Vagina (tissue), 2 donors: ENCODE measurements at regions of chr2 and their contacts with region 1.

Region 1: GRCh38 chr2:219527076-219527394 is 12.8 kb downstream of the ASIC4 start:
- DNase-seq: no peak
- H3K4me3 ChIP-seq: no peak overlapping the region
- H3K27ac ChIP-seq: no peak overlapping the region
- H3K4me1 ChIP-seq: peaks cover 14% of the 10 kb centered on the region
- H3K27me3 ChIP-seq: no peaks in the 10 kb centered on the region
- CTCF ChIP-seq: no peak
- POLR2A ChIP-seq: no peak

Region 2: DNA sequence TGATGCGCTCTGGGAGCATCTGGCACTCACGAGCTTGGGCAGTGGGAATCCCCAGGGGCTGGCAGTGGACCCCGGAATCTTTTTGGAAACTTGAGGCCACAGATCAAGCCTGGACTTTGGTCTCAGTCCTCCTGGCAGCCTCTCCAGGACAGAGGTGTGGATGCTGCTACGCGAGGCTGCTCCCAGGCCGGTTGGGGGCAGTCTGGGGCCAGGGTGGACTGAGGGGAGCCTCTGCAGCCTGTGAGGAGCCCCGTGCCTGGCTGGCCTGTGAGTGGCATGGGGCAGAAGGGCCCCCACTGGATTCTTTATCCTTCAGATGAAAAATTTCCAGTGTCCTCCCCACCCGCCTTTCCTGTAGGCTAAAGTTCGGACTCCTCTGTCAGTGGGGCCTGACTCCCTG is 121.6 kb before region 1 on chr2:
- intact Hi-C with region 1: loop called (anchors 2 kb)
- DNase-seq: no peak
- H3K4me3 ChIP-seq: no peak overlapping the region
- H3K27ac ChIP-seq: peak overlapping the region; percentile 56
- H3K4me1 ChIP-seq: no peaks in the 10 kb centered on the region
- H3K27me3 ChIP-seq: no peaks in the 10 kb centered on the region
- CTCF ChIP-seq: no peak
- POLR2A ChIP-seq: no peak

Region 3: DNA sequence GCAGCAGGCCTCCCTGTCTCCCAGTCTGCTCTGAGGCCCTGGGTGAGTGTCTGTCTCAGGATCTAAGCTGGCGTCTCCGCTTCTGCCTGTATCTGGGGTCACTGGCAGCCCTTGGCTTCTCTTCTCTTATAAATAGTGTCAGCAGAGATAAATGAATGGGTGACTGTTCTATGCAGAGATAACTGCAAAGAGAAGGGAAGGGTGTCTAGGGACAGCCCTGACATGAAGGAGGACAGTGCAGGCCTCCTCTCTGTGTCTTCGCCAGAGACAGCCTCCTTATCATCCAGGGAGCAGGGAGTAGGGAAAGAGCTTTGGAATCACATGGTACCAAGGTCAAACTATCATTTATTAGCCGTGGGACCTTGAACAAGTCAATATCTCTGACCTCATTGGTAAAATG is 56.6 kb before region 1 on chr2:
- intact Hi-C with region 1: loop called (anchors 5 kb)
- DNase-seq: no peak
- H3K4me3 ChIP-seq: no peak overlapping the region
- H3K27ac ChIP-seq: no peak overlapping the region
- H3K4me1 ChIP-seq: peaks cover 30% of the 10 kb centered on the region
- H3K27me3 ChIP-seq: no peaks in the 10 kb centered on the region
- CTCF ChIP-seq: no peak
- POLR2A ChIP-seq: no peak